H1 (cell line): ENCODE measurements at regions of chr12 and their contacts with region 1.

Region 1: DNA sequence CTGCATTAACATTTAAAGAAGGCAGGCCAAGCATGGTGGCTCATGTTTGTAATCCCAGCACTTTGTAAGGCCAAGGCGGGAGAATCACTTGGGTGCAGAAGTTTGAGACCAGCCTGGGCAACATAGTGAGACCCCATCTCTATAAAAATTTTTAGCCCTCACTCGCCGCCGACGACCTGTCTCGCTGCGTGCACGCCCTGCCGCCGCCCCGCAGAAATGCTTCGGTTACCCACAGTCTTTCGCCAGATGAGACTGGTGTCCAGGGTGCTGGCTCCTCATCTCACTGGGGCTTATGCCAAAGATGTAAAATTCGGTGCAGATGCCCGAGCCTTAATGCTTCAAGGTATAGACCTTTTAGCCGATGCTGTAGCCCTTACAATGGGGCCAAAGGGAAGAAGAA is 10.8 kb upstream of the RBMS2 start:
- DNase-seq: no peak
- H3K4me3 ChIP-seq: no peak overlapping the region
- H3K27ac ChIP-seq: no peak overlapping the region
- H3K4me1 ChIP-seq: no peaks in the 10 kb centered on the region
- H3K27me3 ChIP-seq: no peaks in the 10 kb centered on the region
- CTCF ChIP-seq: no peak
- EP300 ChIP-seq: no peak
- POLR2A ChIP-seq: no peak
- RAD21 ChIP-seq: no peak

Region 2: GRCh38 chr12:56476972-56477432 is 33.8 kb before region 1 on chr12:
- CTCF ChIA-PET with region 1: no interaction called
- POLR2A ChIA-PET with region 1: no interaction called
- DNase-seq: no peak
- H3K4me3 ChIP-seq: no peak overlapping the region
- H3K27ac ChIP-seq: no peak overlapping the region
- H3K4me1 ChIP-seq: peaks cover 0 to 3% (median 0%) of the 10 kb centered on the region in 4 experiments; a peak in 1 of 7 replicates
- H3K27me3 ChIP-seq: no peaks in the 10 kb centered on the region
- CTCF ChIP-seq: no peak
- EP300 ChIP-seq: no peak
- POLR2A ChIP-seq: no peak
- RAD21 ChIP-seq: no peak

Region 3: DNA sequence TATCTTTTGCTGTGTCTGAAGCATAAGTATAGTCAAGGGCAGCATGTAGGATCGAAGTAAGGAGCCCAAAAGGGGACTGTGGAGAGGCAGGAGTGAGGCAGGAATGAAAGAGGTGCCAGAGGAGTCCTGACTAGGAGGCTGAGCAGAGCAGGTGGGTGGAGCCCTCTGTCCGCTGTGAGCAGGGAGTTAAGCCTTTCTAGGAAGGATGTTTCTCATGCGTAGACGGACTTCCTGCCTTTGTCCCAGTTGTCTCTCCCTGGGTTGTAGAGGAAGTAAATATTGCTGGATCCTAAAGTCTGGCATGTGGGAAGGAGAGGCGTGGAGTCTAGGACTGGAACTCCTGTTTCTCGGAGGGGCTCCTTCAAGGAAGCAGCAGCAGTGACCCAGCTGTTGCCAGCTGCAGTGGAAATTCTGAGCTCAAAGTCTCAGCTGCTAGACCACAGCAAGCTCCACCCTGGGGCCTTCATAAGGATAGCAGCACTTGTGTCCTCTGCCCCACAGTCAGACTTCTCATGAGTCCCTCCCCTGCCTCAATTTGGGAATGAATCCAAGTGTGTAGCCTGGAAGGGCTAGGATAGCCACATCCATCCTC is 54.8 kb after region 1 on chr12:
- CTCF ChIA-PET with region 1: interaction called, 61 read pairs
- POLR2A ChIA-PET with region 1: no interaction called
- DNase-seq: peak in 1 of 2 experiments; percentile 53
- H3K4me3 ChIP-seq: no peak overlapping the region
- H3K27ac ChIP-seq: no peak overlapping the region
- H3K4me1 ChIP-seq: peaks cover 0 to 4% (median 2%) of the 10 kb centered on the region in 4 experiments; a peak in 4 of 7 replicates
- H3K27me3 ChIP-seq: no peaks in the 10 kb centered on the region
- CTCF ChIP-seq: no peak
- EP300 ChIP-seq: no peak
- POLR2A ChIP-seq: no peak
- RAD21 ChIP-seq: no peak

Region 4: DNA sequence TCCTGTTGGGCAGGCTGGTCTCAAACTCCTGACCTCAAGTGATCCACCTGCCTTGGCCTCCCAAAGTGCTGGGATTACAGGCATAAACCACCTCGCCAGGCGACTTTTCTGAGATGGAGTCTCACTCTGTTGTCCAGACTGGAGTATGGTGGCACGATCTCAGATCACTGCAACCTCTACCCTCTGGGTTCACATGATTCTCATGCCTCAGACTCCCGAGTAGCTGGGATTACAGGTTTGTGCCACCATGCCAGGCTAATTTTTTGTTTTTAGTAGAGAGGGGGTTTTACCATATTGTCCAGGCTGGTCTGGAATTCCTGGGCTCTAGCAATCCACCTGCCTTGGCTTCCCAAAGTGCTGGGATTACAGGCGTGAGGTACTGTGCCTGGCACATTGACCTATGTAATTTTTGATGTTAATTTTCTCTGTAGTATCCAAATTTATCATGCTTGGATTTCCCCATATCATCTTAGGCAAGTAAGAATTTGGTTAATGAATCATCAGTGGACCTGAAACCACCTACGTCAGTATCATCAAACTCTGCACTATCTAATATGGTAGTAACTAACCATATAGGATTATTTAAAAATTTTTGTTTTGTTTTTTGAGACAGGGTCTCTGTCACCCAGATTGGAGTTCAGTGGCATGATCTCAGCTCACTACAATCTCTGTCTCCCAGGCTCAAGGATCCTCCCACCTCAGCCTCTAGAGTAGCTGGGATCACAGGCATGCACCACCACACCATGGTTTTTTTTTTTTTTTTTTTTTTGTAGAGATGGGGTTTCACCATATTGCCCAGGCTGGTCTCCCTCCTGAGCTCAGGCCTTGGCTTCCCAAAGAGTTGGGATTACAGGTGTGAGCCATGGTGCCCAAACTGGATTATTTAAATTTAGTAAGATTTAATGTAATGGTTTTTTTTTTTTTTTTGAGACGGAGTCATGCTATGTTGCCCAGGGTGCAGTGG is 146.9 kb after region 1 on chr12:
- CTCF ChIA-PET with region 1: no interaction called
- POLR2A ChIA-PET with region 1: no interaction called
- DNase-seq: no peak
- H3K4me3 ChIP-seq: no peak overlapping the region
- H3K27ac ChIP-seq: no peak overlapping the region
- H3K4me1 ChIP-seq: no peaks in the 10 kb centered on the region
- H3K27me3 ChIP-seq: no peaks in the 10 kb centered on the region
- CTCF ChIP-seq: no peak
- EP300 ChIP-seq: no peak
- POLR2A ChIP-seq: no peak
- RAD21 ChIP-seq: no peak